MCF 10A (cell line): ENCODE measurements at regions of chr4 and their contacts with region 1.

Region 1: DNA sequence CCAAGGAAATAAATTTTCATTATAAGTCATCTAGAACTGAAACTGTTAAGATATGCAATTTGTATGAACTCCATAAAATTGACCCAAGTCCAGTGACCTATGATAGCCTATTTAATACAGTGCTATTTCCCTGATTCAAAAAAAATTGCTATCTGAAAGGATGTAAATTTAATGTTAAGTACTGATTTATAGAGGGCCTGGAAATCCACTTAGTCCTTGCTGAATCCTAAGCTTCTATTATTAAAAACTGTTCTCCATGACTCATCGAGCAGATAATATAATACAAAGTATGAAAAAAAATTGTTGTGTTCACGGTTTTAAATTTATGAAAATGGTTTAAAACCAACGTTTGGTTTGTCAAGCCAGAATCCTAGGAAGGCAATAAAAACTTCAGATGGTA is 704.8 kb upstream of the AADAT start:
- DNase-seq: no peak
- H3K4me3 Mint-ChIP-seq: no peak overlapping the region
- H3K27ac Mint-ChIP-seq: no peak overlapping the region
- H3K4me1 Mint-ChIP-seq: no peaks in the 10 kb centered on the region
- H3K27me3 Mint-ChIP-seq: no peaks in the 10 kb centered on the region
- CTCF ChIP-seq: no peak

Region 2: GRCh38 chr4:170538821-170539473 is 255.6 kb before region 1 on chr4:
- CTCF ChIA-PET with region 1: interaction called, 3 read pairs
- POLR2A ChIA-PET with region 1: no interaction called
- intact Hi-C with region 1: loop called (anchors 5 kb)
- DNase-seq: no peak
- H3K4me3 Mint-ChIP-seq: no peak overlapping the region
- H3K27ac Mint-ChIP-seq: no peak overlapping the region
- H3K4me1 Mint-ChIP-seq: peaks cover 3% of the 10 kb centered on the region
- H3K27me3 Mint-ChIP-seq: no peaks in the 10 kb centered on the region
- CTCF ChIP-seq: no peak